Uterus (tissue), 4 donors: ENCODE measurements at regions of chr9 and their contacts with region 1.

Region 1: GRCh38 chr9:128927731-128928411 is 7.1 kb downstream of the PHYHD1 start:
- DNase-seq: peak; percentile 53 to 60
- H3K4me3 ChIP-seq: no peak overlapping the region
- H3K27ac ChIP-seq: peak overlapping the region in 1 of 2 donors; percentile 34
- H3K4me1 ChIP-seq: peaks cover 0 to 9% of the 10 kb centered on the region in 2 donors
- H3K27me3 ChIP-seq: no peaks in the 10 kb centered on the region
- CTCF ChIP-seq: peak; percentile 89 to 96 (median 95)
- POLR2A ChIP-seq: no peak

Region 2: GRCh38 chr9:128528445-128529160 is 399.3 kb before region 1 on chr9:
- intact Hi-C with region 1: no loop called
- DNase-seq: no peak
- H3K4me3 ChIP-seq: no peak overlapping the region
- H3K27ac ChIP-seq: no peak overlapping the region
- H3K4me1 ChIP-seq: no peaks in the 10 kb centered on the region
- H3K27me3 ChIP-seq: no peaks in the 10 kb centered on the region
- CTCF ChIP-seq: no peak
- POLR2A ChIP-seq: no peak

Region 3: DNA sequence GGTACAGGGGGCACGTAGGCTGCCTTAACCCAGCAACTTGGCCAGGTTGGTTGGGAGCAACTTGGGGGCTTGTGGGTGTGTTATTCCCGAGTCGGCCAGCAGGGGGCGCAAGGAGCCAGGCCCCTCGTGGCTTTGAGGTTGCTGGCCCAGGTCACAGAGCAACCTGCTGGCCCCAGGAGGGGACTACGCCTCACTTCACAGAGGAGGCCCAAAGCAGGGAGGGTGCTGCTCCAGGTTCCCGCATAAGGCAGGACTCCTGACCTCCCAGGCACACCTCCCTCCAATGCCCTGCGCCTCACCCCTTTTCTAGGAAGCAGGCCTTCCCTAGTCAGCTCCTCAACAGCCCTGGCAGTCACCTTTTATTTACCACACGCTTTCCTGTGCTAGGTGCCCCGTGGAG is 64.2 kb before region 1 on chr9:
- intact Hi-C with region 1: loop called (anchors 2 kb)
- DNase-seq: peak; percentile 75 to 77
- H3K4me3 ChIP-seq: no peak overlapping the region
- H3K27ac ChIP-seq: no peak overlapping the region
- H3K4me1 ChIP-seq: no peaks in the 10 kb centered on the region
- H3K27me3 ChIP-seq: no peaks in the 10 kb centered on the region
- CTCF ChIP-seq: peak; percentile 95 to 98 (median 96)
- POLR2A ChIP-seq: no peak

Region 4: DNA sequence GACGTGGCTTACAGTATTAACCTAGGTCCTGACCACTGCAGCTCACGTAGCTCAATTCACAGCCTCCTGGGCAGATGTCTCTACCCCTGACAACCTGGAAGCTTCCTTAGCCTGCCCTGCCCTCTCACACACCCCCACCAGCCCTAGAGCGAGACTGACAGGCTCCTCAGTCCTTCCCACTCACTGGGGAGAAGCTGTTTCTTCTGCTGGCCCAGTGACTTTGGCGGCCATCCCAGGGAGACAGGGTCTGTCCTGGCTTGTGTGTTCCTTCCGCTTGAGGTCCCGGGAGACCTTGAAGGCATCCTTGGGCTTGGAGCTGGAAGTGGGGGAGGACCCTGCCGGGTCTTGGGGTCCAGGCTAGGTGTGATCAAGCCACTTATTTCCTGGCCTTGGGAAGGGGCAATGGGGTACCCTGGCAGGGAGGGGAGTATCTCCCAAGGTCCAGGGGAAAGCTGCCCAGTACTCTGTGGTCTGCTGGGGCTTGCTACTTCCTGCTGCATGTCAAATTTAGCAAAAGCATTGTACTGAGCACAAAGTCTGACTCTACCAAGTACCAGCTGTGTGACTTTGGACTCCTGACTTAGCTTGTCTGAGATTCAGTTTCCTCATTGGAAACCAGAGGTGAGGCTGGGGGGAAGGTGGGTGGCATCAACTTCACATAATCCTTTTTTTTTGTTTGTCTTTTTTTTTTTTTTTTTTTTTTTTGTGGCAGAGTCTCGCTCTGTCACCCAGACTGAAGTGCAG is 110.4 kb after region 1 on chr9:
- intact Hi-C with region 1: no loop called
- DNase-seq: no peak
- H3K4me3 ChIP-seq: no peak overlapping the region
- H3K27ac ChIP-seq: peak overlapping the region in 1 of 2 donors; percentile 12
- H3K4me1 ChIP-seq: peaks cover 0 to 11% of the 10 kb centered on the region in 2 donors
- H3K27me3 ChIP-seq: no peaks in the 10 kb centered on the region
- CTCF ChIP-seq: no peak
- POLR2A ChIP-seq: no peak